ENCODE measurements at regions of chr2 and their contacts with region 1.

Region 1: DNA sequence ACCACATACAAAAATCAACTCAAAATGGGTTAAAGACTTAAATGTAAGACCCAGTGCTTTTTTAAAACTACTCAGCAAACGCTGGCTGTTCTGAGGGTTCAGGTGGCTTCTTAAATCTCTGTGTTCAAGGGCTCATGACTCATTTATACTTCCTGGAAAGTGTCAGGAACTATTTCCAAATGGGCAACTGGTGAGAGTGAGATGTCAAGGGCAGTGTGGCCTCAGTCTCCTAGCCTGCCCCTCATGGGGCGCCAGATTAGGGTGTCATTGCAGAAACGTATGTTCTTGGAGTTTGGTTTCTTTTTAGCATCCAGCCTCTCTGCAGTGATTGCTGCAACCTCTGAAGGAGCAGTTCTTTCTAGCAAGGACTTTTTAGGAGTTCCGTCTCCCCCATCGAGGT is 485.4 kb downstream of the TNS1 start:
- DNase-seq: no peak
- H3K4me3 ChIP-seq: no peak overlapping the region
- H3K27ac ChIP-seq: no peak overlapping the region
- H3K4me1 ChIP-seq: no peaks in the 10 kb centered on the region
- H3K27me3 ChIP-seq: no peaks in the 10 kb centered on the region
- CTCF ChIP-seq: no peak
- POLR2A ChIP-seq: no peak

Region 2: DNA sequence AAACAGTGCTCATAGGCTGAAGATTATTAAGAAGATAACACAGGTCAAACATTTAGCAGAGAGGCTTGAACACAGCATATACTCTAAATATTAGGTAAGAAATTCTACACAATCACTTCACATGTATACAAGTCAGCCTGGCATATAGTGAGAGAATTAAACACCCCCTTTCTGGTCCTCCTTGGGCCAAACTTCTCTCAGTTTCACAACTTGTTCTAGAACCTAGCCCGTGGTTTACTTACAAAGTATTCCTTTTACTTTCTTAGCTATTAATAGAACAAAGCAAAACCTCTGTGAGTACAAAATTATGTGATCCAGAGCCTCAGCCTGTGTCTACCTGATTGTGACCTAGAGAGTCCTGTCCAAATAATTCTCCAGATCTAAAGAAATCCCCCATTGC is 77.4 kb before region 1 on chr2:
- intact Hi-C with region 1: loop called (anchors 5 kb)
- DNase-seq: no peak
- H3K4me3 ChIP-seq: no peak overlapping the region
- H3K27ac ChIP-seq: peak overlapping the region; percentile 3 to 48
- H3K4me1 ChIP-seq: peaks cover 0 to 2% of the 10 kb centered on the region in 2 donors
- H3K27me3 ChIP-seq: no peaks in the 10 kb centered on the region
- CTCF ChIP-seq: no peak
- POLR2A ChIP-seq: no peak